Psoas muscle (tissue), 8 donors: ENCODE measurements at regions of chr7 and their contacts with region 1.

Region 1: DNA sequence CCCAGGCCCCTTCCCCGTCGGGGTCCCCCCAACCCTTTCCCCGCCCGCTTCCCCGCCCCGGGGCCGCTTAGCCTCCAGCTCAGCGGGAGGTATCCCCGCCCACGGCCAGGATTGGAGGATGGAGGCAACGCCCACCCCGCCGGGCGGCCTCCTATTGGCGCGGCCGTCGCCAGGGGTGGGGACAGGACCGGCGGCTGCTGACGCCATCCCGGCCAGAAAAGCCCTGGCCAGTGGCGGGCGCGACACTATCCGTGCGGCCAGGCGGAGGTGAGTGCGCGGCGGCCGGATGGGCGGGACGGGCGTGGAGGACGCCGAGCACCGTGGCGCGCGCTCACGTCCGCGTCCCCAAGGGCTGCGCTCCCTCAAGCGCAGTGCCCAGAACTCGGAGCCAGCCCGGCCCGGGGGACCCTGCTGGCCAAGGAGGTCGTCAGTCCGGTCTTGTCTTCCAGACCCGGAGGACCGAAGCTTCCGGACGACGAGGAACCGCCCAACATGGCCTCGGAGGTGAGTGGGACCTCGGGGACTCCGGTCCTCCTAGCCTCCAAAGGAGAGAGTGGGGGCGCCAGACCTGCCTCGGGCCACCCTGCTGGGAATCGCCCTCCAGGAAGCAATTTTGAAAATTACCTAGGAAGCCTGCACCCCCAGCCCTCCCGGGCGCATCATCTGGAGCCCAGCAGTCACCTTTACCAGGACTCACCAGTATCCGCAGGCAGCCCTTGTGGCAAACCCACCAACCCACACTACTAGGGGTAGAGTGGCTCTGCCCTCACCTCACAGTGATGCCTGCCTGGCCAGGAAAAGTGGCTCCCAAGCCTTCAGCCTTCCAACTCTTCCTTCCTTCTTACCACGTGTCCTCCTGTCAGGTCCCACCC is at the start of gene ASL:
- DNase-seq: peak; percentile 95 to 96
- ATAC-seq: peak; percentile 100
- H3K4me3 ChIP-seq: peak within 1 kb of the TSS; percentile 95
- H3K27ac ChIP-seq: peak within 1 kb of the TSS; percentile 79
- H3K4me1 ChIP-seq: peaks cover 8% of the 10 kb centered on the region
- H3K27me3 ChIP-seq: no peaks in the 10 kb centered on the region
- CTCF ChIP-seq: no peak
- total RNA-seq, gene ASL: 4.3 to 8.6 (median 6.6) TPM

Region 2: GRCh38 chr7:66114793-66115649 is 39.2 kb after region 1 on chr7 and contains the start of gene CRCP:
- intact Hi-C with region 1: loop called (anchors 5 kb)
- DNase-seq: peak; percentile 84 to 91
- ATAC-seq: peak; percentile 92 to 97 (median 94)
- H3K4me3 ChIP-seq: peak within 1 kb of the TSS; percentile 80
- H3K27ac ChIP-seq: peak within 1 kb of the TSS; percentile 97
- H3K4me1 ChIP-seq: peaks cover 38% of the 10 kb centered on the region
- H3K27me3 ChIP-seq: no peaks in the 10 kb centered on the region
- CTCF ChIP-seq: no peak
- total RNA-seq, gene CRCP: 11.3 to 18.8 (median 13.0) TPM